Activated CD4-positive, alpha-beta T cell treated with anti-CD3 and anti-CD28 coated beads for 36 hours (primary cell): ENCODE measurements at regions of chr19 and their contacts with region 1.

Region 1: GRCh38 chr19:12112701-12113100 is 27.4 kb downstream of the ZNF20 start:
- DNase-seq: peak; percentile 53
- ATAC-seq: peak; percentile 97
- H3K4me3 Mint-ChIP-seq: no peak overlapping the region
- H3K27ac Mint-ChIP-seq: peak overlapping the region; percentile 32
- H3K4me1 Mint-ChIP-seq: peaks cover 30% of the 10 kb centered on the region
- H3K27me3 Mint-ChIP-seq: no peaks in the 10 kb centered on the region

Region 2: GRCh38 chr19:12133069-12133468 is 20.4 kb after region 1 on chr19:
- CTCF ChIA-PET with region 1: no interaction called
- POLR2A ChIA-PET with region 1: no interaction called
- intact Hi-C with region 1: loop called in 1 of 2 experiments (anchors 2 kb)
- DNase-seq: no peak
- ATAC-seq: no peak
- H3K4me3 Mint-ChIP-seq: no peak overlapping the region
- H3K27ac Mint-ChIP-seq: no peak overlapping the region
- H3K4me1 Mint-ChIP-seq: peaks cover 10% of the 10 kb centered on the region
- H3K27me3 Mint-ChIP-seq: no peaks in the 10 kb centered on the region